ENCODE measurements at regions of chr12 and their contacts with region 1.

Region 1: GRCh38 chr12:120292661-120293531 is at the start of gene RNU4-1:
- DNase-seq: peak; percentile 88
- ATAC-seq: peak; percentile 69
- H3K4me3 Mint-ChIP-seq: no peak within 1 kb of the TSS
- H3K27ac Mint-ChIP-seq: no peak within 1 kb of the TSS
- H3K4me1 Mint-ChIP-seq: peaks cover 7% of the 10 kb centered on the region
- H3K27me3 Mint-ChIP-seq: no peaks in the 10 kb centered on the region
- total RNA-seq, gene RNU4-1: 323 to 1,150 TPM

Region 2: DNA sequence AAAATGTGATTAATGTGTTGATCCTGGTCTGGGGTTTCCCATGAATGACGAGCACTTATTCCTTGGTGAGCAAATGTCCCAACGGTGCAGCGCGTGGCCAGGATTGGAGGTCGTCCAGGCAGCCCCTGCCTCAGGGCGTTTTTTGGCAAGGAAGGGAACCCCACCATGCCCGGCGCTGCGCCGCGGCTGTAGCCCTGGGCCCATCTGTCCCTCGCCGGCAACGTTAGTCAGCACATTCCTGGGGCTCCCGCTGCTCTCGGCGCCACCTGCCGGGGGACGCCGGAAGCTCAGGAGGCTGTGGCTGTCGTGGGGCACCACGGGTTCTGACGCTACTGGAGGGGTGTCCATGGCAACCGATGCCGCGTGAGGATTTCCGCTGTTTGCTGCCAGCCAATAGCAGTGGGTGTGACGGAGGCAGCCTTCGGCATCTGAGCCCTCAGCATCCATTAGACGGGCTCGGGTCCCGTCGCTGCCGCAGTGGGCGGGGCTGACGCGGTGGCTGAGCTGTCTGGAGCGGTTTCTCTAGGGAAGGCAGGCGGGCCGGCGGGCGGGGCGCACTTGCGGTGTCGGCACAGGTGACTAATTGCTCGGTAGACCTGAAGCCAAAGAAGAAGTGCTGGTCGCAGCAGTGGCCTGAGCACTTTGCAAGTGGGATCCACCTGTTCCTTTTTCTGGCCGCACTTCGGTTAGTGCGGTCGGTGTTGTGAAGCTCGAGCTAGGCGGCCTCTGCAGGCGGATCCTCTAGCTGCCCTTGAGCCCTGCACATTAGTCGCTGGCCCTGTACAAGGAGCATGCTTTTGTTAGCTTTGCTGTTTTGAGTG is 205.9 kb before region 1 on chr12:
- CTCF ChIA-PET with region 1: no interaction called
- POLR2A ChIA-PET with region 1: interaction called, 15 read pairs
- intact Hi-C with region 1: no loop called
- DNase-seq: peak; percentile 100
- ATAC-seq: peak; percentile 98
- H3K4me3 Mint-ChIP-seq: peak overlapping the region; percentile 46
- H3K27ac Mint-ChIP-seq: peak overlapping the region; percentile 75
- H3K4me1 Mint-ChIP-seq: peaks cover 41% of the 10 kb centered on the region
- H3K27me3 Mint-ChIP-seq: no peaks in the 10 kb centered on the region

Region 3: GRCh38 chr12:120228291-120229070 is 64.4 kb before region 1 on chr12:
- CTCF ChIA-PET with region 1: interaction called, 72 read pairs
- POLR2A ChIA-PET with region 1: interaction called, 275 read pairs
- intact Hi-C with region 1: loop called (anchors 1 kb)
- DNase-seq: peak; percentile 96
- ATAC-seq: peak; percentile 65
- H3K4me3 Mint-ChIP-seq: peak overlapping the region; percentile 16
- H3K27ac Mint-ChIP-seq: peak overlapping the region; percentile 79
- H3K4me1 Mint-ChIP-seq: peaks cover 84% of the 10 kb centered on the region
- H3K27me3 Mint-ChIP-seq: no peaks in the 10 kb centered on the region

Region 4: DNA sequence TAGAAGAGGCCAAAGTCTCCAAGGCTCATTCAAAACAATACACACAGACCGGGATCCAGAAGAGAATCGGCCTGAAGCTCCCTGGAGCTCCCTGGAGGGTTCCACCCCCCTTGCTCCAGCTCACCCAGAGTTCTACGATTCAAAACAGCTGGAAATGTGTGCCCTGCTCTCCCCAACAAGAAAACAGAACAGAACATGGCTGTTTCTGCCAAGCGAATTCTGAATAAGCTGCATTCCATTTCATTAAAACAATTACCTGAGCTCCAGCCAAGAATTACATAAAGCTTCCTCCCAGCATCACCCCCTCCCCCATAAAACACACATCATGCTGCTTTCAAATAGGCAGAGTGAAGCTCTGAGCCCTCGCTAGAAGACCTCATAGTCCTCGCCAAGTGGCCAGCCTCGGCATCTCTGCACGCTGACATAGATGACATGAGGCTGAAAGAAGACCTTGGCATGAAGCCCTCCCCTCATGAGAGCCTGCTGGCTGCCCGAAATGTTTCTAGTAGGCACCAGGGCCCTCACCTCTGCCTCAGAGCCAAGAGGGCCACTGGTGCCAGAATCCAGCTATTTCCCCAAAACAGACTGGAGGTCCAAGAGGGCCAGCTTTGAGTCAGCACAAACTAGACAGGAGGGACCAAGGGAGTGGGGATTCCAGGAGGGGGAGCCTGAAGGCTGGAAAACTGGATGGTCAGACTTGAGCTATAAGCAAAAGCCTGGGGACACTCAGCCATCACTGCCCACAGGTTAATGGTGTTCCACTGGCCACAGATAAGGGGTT is 35.7 kb before region 1 on chr12:
- CTCF ChIA-PET with region 1: interaction called, 4 read pairs
- POLR2A ChIA-PET with region 1: interaction called, 117 read pairs
- intact Hi-C with region 1: no loop called
- DNase-seq: no peak
- ATAC-seq: no peak
- H3K4me3 Mint-ChIP-seq: no peak overlapping the region
- H3K27ac Mint-ChIP-seq: peak overlapping the region; percentile 76
- H3K4me1 Mint-ChIP-seq: peaks cover 87% of the 10 kb centered on the region
- H3K27me3 Mint-ChIP-seq: no peaks in the 10 kb centered on the region

Region 5: GRCh38 chr12:120356567-120357030 is 63.7 kb after region 1 on chr12:
- CTCF ChIA-PET with region 1: no interaction called
- POLR2A ChIA-PET with region 1: no interaction called
- intact Hi-C with region 1: no loop called
- DNase-seq: peak; percentile 88
- ATAC-seq: peak; percentile 96
- H3K4me3 Mint-ChIP-seq: no peak overlapping the region
- H3K27ac Mint-ChIP-seq: no peak overlapping the region
- H3K4me1 Mint-ChIP-seq: peaks cover 2% of the 10 kb centered on the region
- H3K27me3 Mint-ChIP-seq: peaks cover 24% of the 10 kb centered on the region

Region 6: GRCh38 chr12:120437754-120438494 is 145.0 kb after region 1 on chr12 and contains the start of gene COX6A1:
- CTCF ChIA-PET with region 1: interaction called, 3 read pairs
- POLR2A ChIA-PET with region 1: interaction called, 11 read pairs
- intact Hi-C with region 1: loop called in 1 of 2 experiments (anchors 2 kb)
- DNase-seq: peak; percentile 99
- ATAC-seq: peak; percentile 97
- H3K4me3 Mint-ChIP-seq: peak within 1 kb of the TSS; percentile 99
- H3K27ac Mint-ChIP-seq: peak within 1 kb of the TSS; percentile 99
- H3K4me1 Mint-ChIP-seq: peaks cover 23% of the 10 kb centered on the region
- H3K27me3 Mint-ChIP-seq: peaks cover 4% of the 10 kb centered on the region
- total RNA-seq, gene COX6A1: 424 to 495 TPM

Region 7: GRCh38 chr12:120534203-120534702 is 241.4 kb after region 1 on chr12 and contains the start of gene RNF10:
- CTCF ChIA-PET with region 1: interaction called, 3 read pairs
- POLR2A ChIA-PET with region 1: interaction called, 11 read pairs
- intact Hi-C with region 1: loop called in 1 of 2 experiments (anchors 1 kb)
- DNase-seq: peak; percentile 82
- ATAC-seq: peak; percentile 67
- H3K4me3 Mint-ChIP-seq: peak within 1 kb of the TSS; percentile 87
- H3K27ac Mint-ChIP-seq: peak within 1 kb of the TSS; percentile 95
- H3K4me1 Mint-ChIP-seq: peaks cover 46% of the 10 kb centered on the region
- H3K27me3 Mint-ChIP-seq: no peaks in the 10 kb centered on the region
- total RNA-seq, gene RNF10: 177 to 184 TPM

Region 8: DNA sequence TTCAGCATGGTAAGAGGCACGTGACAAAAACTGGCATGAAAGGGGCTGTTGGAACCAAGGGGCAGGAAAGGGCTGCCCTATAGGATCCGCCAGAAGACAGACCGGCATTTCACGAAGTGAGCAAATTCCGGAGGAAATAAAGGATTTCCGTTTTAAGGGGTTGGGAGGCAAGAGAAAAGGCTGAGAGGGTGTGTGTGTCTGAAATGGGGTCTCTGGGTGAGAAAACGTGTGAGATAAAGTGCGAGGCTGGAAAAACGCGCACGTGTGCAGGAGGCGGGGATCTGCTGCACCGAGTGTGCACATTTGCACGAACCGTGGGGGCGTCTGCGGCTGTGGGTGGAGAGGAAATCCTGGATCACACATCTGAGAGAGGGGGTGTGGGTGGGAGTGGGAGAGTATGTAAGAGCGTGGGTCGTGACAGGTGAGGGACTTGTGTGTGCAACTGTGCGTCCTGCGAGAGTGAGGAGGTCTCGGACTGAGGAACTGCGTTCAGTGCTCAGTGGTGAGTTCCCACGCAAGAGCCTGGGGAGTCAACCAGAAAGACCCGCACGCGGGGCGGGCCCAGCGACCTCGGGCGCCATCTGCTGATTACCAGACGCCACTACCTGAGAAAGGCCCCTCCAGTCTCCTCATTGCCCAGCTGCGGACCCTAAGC is 802.8 kb after region 1 on chr12:
- CTCF ChIA-PET with region 1: no interaction called
- POLR2A ChIA-PET with region 1: no interaction called
- intact Hi-C with region 1: no loop called
- DNase-seq: peak; percentile 88
- ATAC-seq: peak; percentile 88
- H3K4me3 Mint-ChIP-seq: peak overlapping the region; percentile 65
- H3K27ac Mint-ChIP-seq: peak overlapping the region; percentile 56
- H3K4me1 Mint-ChIP-seq: peaks cover 43% of the 10 kb centered on the region
- H3K27me3 Mint-ChIP-seq: peaks cover 5% of the 10 kb centered on the region

Measured in activated CD4-positive, alpha-beta T cell treated with anti-CD3 and anti-CD28 coated beads for 36 hours (primary cell).